ENCODE measurements at regions of chr17 and their contacts with region 1.

Region 1: GRCh38 chr17:47789611-47790561 is 31.7 kb downstream of the OSBPL7 start:
- DNase-seq: peak in 4 of 5 donors; percentile 35 to 79 (median 61)
- ATAC-seq: peak; percentile 42 to 95 (median 89)
- H3K4me3 ChIP-seq: peak overlapping the region in 11 of 12 donors; percentile 32 to 51 (median 42)
- H3K27ac ChIP-seq: no peak overlapping the region
- H3K4me1 ChIP-seq: peaks cover 0 to 10% (median 5%) of the 10 kb centered on the region in 12 donors
- H3K27me3 ChIP-seq: peaks cover 17 to 95% (median 65%) of the 10 kb centered on the region in 9 donors
- CTCF ChIP-seq: peak; percentile 30 to 66 (median 48)
- POLR2A ChIP-seq: no peak

Region 2: GRCh38 chr17:47087093-47087492 is 702.8 kb before region 1 on chr17:
- intact Hi-C with region 1: no loop called
- DNase-seq: no peak
- ATAC-seq: no peak
- H3K4me3 ChIP-seq: no peak overlapping the region
- H3K27ac ChIP-seq: no peak overlapping the region
- H3K4me1 ChIP-seq: no peaks in the 10 kb centered on the region
- H3K27me3 ChIP-seq: no peaks in the 10 kb centered on the region
- CTCF ChIP-seq: no peak
- POLR2A ChIP-seq: no peak

Region 3: DNA sequence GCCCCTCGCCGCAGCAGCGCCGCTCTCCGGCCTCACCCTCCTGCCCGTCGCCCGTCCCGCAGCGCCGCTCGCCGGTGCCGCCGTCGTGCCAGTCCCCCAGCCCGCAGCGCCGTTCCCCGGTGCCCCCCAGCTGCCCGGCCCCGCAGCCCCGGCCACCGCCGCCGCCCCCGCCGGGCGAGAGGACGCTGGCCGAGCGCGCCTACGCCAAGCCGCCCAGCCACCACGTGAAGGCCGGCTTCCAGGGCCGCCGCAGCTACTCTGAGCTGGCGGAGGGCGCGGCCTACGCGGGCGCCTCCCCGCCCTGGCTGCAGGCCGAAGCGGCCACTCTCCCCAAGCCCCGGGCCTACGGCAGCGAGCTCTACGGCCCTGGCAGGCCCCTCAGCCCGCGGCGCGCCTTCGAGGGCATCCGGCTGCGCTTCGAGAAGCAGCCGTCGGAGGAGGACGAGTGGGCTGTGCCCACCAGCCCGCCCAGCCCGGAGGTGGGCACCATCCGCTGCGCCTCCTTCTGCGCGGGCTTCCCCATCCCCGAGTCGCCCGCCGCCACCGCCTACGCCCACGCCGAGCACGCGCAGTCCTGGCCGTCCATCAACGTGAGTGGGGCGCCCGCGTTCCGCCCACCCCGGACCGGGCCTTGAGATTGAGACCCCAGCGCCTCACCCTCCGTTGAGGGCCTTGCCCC is 80.9 kb before region 1 on chr17:
- intact Hi-C with region 1: loop called in 2 of 10 experiments (anchors 10 kb)
- DNase-seq: peak in 4 of 5 donors; percentile 36 to 71 (median 60)
- ATAC-seq: peak; percentile 40 to 74 (median 56)
- H3K4me3 ChIP-seq: peak overlapping the region in 10 of 12 donors; percentile 8 to 59 (median 35)
- H3K27ac ChIP-seq: peak overlapping the region in 6 of 12 donors; percentile 44 to 67 (median 52)
- H3K4me1 ChIP-seq: peaks cover 0 to 54% (median 24%) of the 10 kb centered on the region in 12 donors
- H3K27me3 ChIP-seq: no peaks in the 10 kb centered on the region
- CTCF ChIP-seq: no peak
- POLR2A ChIP-seq: no peak

Region 4: DNA sequence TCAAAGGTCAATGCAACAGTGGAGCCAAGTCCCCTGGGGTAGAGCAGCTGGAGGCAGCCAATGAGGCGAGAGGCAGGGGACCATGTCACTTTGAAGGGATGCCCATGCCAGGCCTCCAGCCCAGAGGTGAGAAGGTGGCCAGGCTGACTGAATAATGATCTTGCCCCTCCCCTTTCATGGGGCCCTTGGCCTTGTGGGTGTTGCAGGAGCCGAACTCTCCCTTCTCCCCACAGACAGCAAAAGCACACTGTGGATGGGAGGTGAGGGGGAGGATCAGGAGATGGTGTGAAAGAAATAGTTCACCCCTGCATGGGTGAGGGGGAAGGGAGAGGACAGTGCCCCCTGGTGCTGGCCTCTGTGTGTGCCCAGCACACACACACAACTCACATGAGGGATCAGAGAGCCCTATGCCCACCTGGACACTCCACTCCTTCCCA is 72.6 kb before region 1 on chr17:
- intact Hi-C with region 1: loop called in 1 of 10 experiments (anchors 5 kb)
- DNase-seq: no peak
- ATAC-seq: no peak
- H3K4me3 ChIP-seq: no peak overlapping the region
- H3K27ac ChIP-seq: no peak overlapping the region
- H3K4me1 ChIP-seq: peaks cover 0 to 44% (median under 1%) of the 10 kb centered on the region in 12 donors
- H3K27me3 ChIP-seq: peaks cover 7 to 44% (median 33%) of the 10 kb centered on the region in 9 donors
- CTCF ChIP-seq: peak in 9 of 12 donors; percentile 13 to 45 (median 30)
- POLR2A ChIP-seq: no peak

Region 5: GRCh38 chr17:47776330-47777197 is 13.3 kb before region 1 on chr17:
- intact Hi-C with region 1: no loop called
- DNase-seq: no peak
- ATAC-seq: peak in 1 of 4 donors; percentile 60
- H3K4me3 ChIP-seq: no peak overlapping the region
- H3K27ac ChIP-seq: no peak overlapping the region
- H3K4me1 ChIP-seq: peaks cover 0 to 4% (median 0%) of the 10 kb centered on the region in 12 donors
- H3K27me3 ChIP-seq: peaks cover 15 to 69% (median 30%) of the 10 kb centered on the region in 9 donors
- CTCF ChIP-seq: peak; percentile 43 to 65 (median 58)
- POLR2A ChIP-seq: no peak